AG04450 (cell line): ENCODE measurements at regions of chr16 and their contacts with region 1.

Region 1: DNA sequence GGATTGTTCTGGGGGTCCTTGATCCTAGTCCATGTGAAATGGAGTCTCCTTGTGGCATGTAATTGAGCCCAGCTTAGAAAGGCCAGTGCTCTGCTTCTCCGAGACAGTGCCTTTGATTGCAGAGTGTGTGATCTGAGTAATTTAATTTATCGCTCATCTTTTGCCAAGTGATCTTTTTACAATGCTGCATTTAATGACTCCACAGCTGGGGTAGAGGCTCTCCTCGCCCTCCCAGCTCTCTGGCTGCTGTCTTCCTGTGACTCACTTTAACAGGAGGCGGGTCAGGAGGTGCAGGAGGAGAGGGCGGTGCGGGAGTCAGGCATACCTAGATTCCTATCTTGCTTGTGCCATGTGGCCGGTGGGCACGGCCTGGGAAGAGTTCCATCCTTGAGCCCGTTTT is 113.4 kb upstream of the FOXF1 start:
- DNase-seq: peak; percentile 88
- H3K4me3 ChIP-seq: peak overlapping the region; percentile 38
- H3K27ac ChIP-seq: peak overlapping the region; percentile 98
- H3K27me3 ChIP-seq: no peaks in the 10 kb centered on the region
- CTCF ChIP-seq: no peak

Region 2: DNA sequence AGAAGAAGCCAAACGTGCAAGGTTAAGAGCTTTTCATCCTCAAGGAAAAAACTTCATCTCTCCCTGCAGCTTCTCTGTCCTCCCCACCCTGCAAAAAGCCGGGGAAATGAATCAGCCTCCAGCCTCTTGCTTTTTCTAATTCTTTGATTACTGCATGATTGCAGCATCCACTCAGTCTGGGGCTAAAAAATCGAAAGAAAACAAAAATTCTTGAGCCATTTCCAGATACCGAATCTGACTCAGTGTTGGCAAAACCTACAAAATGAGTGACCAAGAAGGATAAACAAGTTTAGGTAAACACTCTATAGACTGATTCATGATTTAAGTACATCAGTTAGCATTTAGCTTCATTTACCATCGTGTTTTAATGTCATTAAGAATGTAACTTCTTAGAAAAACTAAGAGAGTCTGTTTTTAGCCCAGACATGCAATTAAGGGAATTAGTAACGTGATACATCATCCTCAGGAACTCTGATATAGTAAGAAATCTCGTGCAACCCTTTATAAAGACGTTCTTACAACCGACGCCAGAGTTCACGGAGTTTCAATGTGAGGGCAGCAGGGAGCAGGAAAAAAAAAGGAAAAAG is 173.8 kb before region 1 on chr16:
- CTCF ChIA-PET with region 1: interaction called, 3 read pairs
- POLR2A ChIA-PET with region 1: interaction called, 18 read pairs
- DNase-seq: peak; percentile 94
- H3K4me3 ChIP-seq: peak overlapping the region; percentile 80
- H3K27ac ChIP-seq: peak overlapping the region; percentile 99
- H3K27me3 ChIP-seq: no peaks in the 10 kb centered on the region
- CTCF ChIP-seq: peak; percentile 24; the same call in 1 of the 2 replicates

Region 3: DNA sequence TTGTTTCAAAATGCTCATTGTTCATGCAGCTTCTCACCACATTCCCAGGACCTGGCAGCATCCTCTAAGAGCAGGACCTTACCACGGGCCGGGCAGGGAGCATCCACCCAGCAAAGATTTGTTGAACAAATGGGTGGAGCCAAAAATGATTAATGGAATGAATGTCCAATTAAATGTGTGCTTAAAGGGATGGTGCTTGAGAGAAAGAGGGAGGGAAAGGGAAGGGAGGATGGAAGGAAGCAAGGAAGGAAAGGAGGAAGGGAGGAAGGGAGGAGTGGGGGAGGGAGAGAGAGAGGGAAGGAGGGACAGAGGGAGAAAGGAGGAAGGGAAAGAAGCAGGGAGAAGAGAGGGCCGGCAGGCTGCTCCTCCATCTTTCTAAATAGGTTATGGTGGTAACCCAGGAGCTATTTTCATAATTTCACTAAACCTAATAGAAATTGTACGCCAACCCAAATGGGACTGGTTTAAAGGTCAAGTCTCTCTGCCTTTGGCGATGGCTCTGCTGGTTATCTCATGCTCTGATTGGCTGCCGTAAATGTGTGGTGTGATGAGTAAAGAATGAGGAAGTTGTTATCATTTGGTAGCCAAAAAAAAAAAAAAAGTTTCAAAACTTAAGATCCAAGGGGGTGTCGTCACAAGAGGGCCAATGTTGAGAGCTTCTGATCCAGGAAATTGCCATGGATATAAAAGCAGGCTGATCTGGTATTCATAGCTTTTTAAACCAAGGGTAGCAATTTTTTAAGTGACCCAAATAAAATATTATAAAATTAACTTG is 13.2 kb before region 1 on chr16:
- CTCF ChIA-PET with region 1: no interaction called
- POLR2A ChIA-PET with region 1: interaction called, 13 read pairs
- DNase-seq: peak; percentile 78
- H3K4me3 ChIP-seq: no peak overlapping the region
- H3K27ac ChIP-seq: peak overlapping the region; percentile 83
- H3K27me3 ChIP-seq: no peaks in the 10 kb centered on the region
- CTCF ChIP-seq: no peak

Region 4: DNA sequence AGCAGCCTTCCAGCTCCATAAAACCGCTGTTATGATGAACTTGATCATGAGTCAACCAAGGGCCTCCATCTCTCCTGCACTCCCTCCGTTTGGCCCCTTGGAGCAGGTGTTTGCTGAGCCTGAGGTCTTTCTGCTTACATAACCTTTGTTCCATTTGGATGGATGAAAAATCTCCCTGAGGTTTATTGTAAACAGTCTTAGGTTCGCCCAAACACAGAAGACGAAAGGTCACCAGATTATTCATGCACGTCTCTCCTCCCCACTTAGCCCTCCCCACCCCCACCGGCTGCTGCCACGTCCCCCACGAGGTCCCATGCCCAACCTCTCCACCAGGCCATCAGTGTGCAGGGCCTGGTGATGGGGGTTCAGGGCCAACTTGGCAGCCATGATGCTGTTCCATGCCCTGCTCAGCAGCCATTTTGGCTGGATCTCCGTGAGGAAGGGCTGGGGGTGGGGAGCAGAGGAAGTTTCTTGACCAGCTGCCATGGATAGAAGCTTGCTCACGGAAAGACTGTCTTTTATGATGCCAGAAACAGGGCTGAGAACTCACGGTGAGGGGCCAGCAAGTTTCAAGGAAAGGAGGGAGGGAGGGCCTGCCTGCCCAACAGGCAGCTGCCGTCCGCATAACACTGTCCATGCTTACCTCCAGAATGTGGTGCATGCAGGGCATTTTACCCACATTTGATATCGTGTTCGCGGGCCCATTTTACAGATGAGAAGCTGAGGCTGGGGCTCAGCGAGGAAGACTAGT is 65.6 kb after region 1 on chr16:
- CTCF ChIA-PET with region 1: no interaction called
- POLR2A ChIA-PET with region 1: interaction called, 16 read pairs
- DNase-seq: peak; percentile 98
- H3K4me3 ChIP-seq: no peak overlapping the region
- H3K27ac ChIP-seq: peak overlapping the region; percentile 95
- H3K27me3 ChIP-seq: no peaks in the 10 kb centered on the region
- CTCF ChIP-seq: peak; percentile 31

Region 5: DNA sequence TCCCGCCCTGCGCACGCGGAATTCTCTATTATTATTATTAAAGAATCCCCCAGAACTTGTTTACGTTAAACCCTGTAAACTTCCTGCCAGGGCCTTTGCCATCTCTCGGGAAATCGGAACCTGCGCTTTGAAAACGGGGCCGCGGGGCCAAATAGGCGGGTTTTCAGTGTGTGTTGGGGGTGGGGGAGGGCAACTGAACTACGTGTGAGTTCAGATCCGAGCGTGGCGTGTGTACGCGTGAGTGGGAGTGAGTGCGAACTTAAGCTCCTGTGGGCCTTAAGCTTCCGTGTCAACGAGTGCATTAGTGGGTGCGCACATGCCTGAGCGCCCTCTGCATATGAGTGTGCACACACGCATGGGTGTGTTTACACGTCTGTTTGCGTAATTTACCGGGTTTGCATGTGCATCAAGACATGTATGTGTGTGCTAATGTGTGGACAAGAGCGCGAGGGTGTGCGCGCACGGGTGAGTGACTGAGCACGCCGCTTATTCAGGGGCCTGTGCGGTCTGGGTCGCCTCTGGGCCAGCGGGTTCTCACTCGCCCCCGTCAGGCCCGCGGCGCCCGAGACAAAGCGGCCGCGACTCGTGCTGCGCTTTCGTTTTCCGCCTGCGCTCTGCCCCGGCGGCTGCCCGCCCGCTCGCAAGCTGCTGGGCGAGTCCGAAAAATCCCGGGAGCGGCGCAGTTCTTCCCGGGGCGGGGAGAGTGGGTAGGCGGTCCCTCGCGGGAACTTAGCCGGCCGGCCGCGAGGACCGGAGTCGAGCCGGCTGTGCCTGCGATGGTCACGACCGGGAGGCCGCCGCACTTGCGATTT is 112.3 kb after region 1 on chr16:
- CTCF ChIA-PET with region 1: no interaction called
- POLR2A ChIA-PET with region 1: interaction called, 18 read pairs
- DNase-seq: peak; percentile 75
- H3K4me3 ChIP-seq: peak overlapping the region; percentile 95
- H3K27ac ChIP-seq: peak overlapping the region; percentile 97
- H3K27me3 ChIP-seq: no peaks in the 10 kb centered on the region
- CTCF ChIP-seq: 0 out of 2 replicates have a peak, but pooled peaks have one; percentile 7

Region 6: DNA sequence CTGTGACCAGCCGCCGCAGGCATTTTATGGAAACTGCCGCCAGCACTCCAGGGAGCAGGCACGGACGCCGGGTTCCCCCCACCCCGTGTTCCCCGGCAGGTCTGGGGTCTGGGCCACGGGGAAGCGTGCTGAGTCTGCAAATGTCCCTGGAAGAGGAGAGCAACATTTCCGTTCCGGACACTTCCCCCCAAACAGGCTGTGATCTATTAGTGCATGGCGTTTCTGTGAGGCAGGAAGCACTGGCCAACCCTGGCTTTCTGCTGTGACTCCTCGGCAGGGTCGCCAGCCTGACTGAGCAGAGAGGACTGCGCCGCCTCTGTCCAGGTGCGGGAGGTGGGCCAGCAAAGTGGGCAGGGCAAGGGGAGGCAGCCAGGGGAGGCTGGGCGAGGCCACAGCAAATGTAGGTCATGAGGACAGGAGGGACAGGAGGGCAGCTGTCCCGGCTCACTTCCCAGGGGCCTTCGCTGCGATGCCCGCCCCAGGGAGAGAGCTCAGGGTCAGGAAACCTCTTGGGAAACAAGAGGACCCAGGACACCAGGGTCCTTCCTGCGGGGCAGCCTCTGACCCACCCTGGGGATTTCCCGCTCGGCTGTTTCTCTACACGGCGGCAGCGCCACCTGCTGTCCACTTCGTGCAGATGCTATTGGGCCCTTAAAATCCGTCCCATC is 122.9 kb after region 1 on chr16:
- CTCF ChIA-PET with region 1: interaction called, 3 read pairs
- POLR2A ChIA-PET with region 1: interaction called, 14 read pairs
- DNase-seq: peak; percentile 51
- H3K4me3 ChIP-seq: peak overlapping the region; percentile 42
- H3K27ac ChIP-seq: peak overlapping the region; percentile 47
- H3K27me3 ChIP-seq: no peaks in the 10 kb centered on the region
- CTCF ChIP-seq: peak; percentile 92

Region 7: GRCh38 chr16:87125267-87126155 is 728.6 kb after region 1 on chr16:
- CTCF ChIA-PET with region 1: no interaction called
- POLR2A ChIA-PET with region 1: no interaction called
- DNase-seq: no peak
- H3K4me3 ChIP-seq: no peak overlapping the region
- H3K27ac ChIP-seq: no peak overlapping the region
- H3K27me3 ChIP-seq: peaks cover 19% of the 10 kb centered on the region
- CTCF ChIP-seq: no peak